Tibial artery (tissue), 4 donors: ENCODE measurements at regions of chr3 and their contacts with region 1.

Region 1: GRCh38 chr3:78076379-78076778 is 1036.5 kb downstream of the ROBO2 start:
- DNase-seq: no peak
- H3K4me3 ChIP-seq: no peak overlapping the region
- H3K27ac ChIP-seq: no peak overlapping the region
- H3K4me1 ChIP-seq: no peaks in the 10 kb centered on the region
- H3K27me3 ChIP-seq: no peaks in the 10 kb centered on the region
- CTCF ChIP-seq: no peak

Region 2: GRCh38 chr3:76456322-76456721 is 1620.1 kb before region 1 on chr3:
- intact Hi-C with region 1: loop called (anchors 5 kb)
- DNase-seq: no peak
- H3K4me3 ChIP-seq: no peak overlapping the region
- H3K27ac ChIP-seq: no peak overlapping the region
- H3K4me1 ChIP-seq: no peaks in the 10 kb centered on the region
- H3K27me3 ChIP-seq: no peaks in the 10 kb centered on the region
- CTCF ChIP-seq: no peak

Region 3: DNA sequence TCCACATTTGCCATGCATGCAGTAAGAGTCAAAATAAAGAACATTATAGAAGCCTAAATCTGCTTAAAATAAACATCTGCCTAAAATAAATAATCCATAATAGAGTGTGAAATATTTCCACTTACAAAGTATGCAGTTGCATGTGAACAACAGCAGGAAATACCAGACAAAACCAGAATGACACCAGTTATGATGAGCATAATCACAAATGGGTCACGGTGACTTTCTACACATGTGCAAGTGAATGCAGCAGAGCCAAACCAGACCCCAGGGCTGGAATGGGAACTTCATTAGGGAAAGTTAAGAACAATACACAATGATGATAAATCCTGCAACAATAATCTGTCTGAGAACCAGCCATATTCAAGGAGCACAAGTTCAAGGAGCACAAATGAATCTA is 421.0 kb before region 1 on chr3:
- intact Hi-C with region 1: no loop called
- DNase-seq: no peak
- H3K4me3 ChIP-seq: no peak overlapping the region
- H3K27ac ChIP-seq: no peak overlapping the region
- H3K4me1 ChIP-seq: no peaks in the 10 kb centered on the region
- H3K27me3 ChIP-seq: no peaks in the 10 kb centered on the region
- CTCF ChIP-seq: no peak